GM13977 (cell line): ENCODE measurements at regions of chr18 and their contacts with region 1.

Region 1: DNA sequence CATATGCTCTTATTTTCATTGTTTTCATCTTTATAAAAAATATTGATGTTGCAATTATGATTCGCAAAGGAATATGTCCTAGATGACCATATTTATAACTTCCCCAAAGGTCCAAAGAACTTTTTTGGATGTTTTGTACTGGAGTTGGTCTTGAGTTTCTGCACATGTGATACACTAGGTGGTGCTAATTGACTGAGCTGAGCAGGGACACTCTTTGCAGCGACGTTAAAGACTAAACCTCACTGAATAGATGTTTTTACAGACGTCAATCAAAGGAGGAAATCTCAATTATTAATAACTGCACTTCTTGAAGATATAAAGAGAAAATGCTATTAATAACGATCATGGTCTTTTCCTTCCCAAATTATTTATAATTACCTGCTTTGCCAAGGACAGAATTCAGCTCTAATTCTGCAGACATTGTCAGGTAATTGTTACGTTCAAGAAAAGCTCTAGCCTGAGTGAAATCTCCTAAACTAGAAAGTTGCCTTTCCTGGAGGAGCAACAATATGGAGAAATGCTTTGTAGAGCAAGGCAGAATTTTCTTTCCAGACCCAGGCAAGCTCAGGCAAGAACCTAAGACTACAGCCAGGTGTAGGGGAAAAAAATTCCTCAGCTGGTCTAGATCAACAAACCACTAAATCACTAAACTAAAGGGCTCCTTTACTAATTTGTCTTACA is 119.3 kb upstream of the RBBP8 start:
- DNase-seq: peak; percentile 33
- CTCF ChIP-seq: peak; percentile 60

Region 2: GRCh38 chr18:22765896-22766295 is 47.9 kb before region 1 on chr18:
- in situ Hi-C with region 1: no loop called
- DNase-seq: no peak
- CTCF ChIP-seq: no peak

Region 3: GRCh38 chr18:23012249-23012648 is 198.5 kb after region 1 on chr18:
- in situ Hi-C with region 1: no loop called
- DNase-seq: no peak
- CTCF ChIP-seq: no peak

Region 4: DNA sequence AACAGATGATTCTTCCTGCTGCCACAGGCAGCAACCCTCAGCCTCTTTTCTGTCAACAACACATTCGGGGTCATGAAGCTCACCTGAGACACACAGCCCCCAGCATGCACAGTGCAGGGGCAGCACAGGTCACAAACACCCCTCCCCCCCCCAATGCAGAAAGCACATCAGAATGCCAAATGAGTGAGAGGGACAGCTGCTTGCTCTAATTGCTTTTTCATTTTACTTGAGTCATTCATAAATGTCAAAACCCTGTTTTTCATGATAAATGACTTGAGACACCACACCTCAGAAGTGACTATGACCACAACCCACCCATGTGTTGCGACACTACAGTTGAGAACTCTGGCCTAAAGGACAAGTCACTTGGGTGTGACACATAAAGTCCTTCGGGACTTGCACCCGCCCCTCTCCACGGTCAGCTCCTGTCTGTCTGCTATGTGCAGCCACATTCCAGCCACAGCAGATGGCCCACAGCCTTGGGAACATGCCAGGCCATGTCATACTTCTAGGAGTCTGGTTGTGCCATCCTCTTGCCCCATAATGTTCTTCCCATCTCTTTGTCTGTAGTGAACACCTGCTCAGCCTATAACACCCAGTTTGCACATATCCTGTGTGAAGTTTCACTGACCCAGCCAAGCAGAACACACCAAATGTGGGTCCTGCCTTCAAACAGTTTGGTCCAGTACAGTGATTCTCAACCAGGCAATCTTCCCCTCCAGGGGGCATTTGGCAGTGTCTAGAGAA is 609.1 kb after region 1 on chr18:
- in situ Hi-C with region 1: loop called (anchors 25 kb)
- DNase-seq: peak; percentile 53
- CTCF ChIP-seq: peak; percentile 12